ENCODE measurements at regions of chr2 and their contacts with region 1.

Region 1: DNA sequence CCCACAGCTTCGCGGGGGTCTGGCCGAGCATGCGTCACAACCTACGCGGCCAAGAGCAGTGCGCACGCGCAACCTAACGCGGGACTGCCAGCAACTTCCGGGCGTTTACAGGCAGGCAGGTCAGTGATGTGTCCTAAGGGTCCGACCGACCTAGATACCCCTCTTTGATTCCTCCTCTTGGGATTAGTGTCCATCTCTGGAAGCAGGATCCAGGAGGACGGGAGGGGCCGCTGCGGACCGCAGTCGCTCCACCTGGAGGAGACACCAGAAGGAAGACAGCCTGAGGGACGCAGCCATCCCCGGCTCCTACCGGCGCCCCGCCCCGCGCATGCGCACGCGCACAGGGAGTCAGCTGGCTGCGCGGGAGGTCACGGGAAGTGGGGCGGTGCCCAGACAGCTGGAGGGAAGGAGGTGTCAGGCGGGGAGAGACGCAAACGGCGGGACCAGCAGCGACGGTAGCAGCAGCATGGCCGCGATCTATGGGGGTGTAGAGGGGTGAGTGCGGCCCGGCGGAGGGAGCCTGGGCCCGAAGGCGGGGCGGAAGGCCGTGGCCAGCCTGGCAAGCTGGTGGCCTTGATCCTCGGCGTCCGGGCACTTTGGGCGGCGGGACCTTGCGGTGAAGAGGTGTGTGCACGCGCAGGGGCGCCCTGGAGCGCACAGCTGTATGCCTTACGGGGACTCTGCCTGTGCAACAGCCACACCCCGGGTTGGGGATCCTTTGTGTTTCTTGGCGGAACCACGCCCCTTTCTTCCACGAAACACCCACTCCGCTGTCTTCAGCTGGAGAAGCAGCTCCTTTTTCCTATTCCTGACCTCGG is at the start of gene NAGK:
- DNase-seq: peak; percentile 91
- ATAC-seq: peak; percentile 63
- H3K4me3 ChIP-seq: peak within 1 kb of the TSS; percentile 70
- H3K27ac ChIP-seq: peak within 1 kb of the TSS; percentile 90
- H3K4me1 ChIP-seq: peaks cover 51% of the 10 kb centered on the region
- H3K27me3 ChIP-seq: no peaks in the 10 kb centered on the region
- CTCF ChIP-seq: 0 out of 6 replicates have a peak, but pooled peaks of 1 of the 3 experiments have one; percentile 3
- EP300 ChIP-seq: 0 out of 4 replicates have a peak, but pooled peaks of 1 of the 2 experiments have one; percentile 6
- POLR2A ChIP-seq: peak; percentile 100
- RAD21 ChIP-seq: no peak
- polyA plus RNA-seq, gene NAGK: 67.8 to 72.5 TPM

Region 2: DNA sequence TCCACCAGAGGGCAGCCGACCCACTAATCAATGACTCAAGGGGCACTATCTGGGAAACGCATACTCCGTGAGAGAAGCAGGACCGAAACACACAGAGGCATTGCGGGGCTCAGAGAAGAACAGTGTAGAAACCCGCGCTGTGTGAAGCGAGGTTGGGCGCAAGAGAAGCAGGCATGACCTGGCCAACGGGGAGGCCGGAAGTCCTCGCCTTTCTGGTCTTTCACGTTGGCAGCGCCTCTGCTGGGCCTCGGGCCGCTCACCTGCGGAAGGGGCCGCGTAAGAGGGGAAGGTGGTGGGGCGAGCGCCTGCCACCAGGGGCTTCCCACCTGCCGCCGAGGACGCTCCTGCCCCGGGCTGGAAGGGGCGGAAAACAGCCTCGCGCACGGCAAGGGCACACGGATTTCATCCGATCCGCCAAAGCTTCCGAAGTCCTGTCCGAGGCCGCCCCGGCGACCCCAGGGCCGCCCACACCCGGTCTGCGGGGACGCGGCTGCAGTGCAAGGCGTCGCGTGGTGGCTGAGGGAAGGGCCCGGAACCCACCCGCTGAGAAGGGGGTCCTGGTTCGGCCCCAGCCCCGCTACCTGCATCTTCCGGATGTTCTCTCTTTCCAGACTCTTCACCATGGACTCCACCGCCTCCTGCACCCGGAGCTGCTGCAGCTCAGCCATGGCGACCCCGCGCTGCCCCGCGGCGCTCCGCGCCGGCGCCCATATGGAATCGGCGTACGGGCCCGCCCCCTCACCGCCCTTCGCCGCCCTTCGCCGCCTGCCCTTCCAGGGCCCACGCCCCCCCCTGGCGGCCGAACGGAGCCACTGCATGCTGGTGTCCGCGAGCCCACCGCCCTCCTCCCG is 766.9 kb before region 1 on chr2 and contains the start of gene FAM136A:
- CTCF ChIA-PET with region 1: no interaction called
- POLR2A ChIA-PET with region 1: no interaction called
- RAD21 ChIA-PET with region 1: no interaction called
- SMC1A ChIA-PET with region 1: no interaction called
- in situ Hi-C with region 1: loop called (anchors 10 kb)
- intact Hi-C with region 1: no loop called
- DNase-seq: peak; percentile 40
- ATAC-seq: peak; percentile 93
- H3K4me3 ChIP-seq: peak within 1 kb of the TSS; percentile 84
- H3K27ac ChIP-seq: peak within 1 kb of the TSS; percentile 85
- H3K4me1 ChIP-seq: peaks cover 3% of the 10 kb centered on the region; the same call in 1 of the 2 replicates
- H3K27me3 ChIP-seq: no peaks in the 10 kb centered on the region
- CTCF ChIP-seq: peak; percentile 88 to 97 (median 95)
- EP300 ChIP-seq: no peak
- POLR2A ChIP-seq: peak; percentile 82
- RAD21 ChIP-seq: peak; percentile 70
- polyA plus RNA-seq, gene FAM136A: 128 to 134 TPM

Region 3: DNA sequence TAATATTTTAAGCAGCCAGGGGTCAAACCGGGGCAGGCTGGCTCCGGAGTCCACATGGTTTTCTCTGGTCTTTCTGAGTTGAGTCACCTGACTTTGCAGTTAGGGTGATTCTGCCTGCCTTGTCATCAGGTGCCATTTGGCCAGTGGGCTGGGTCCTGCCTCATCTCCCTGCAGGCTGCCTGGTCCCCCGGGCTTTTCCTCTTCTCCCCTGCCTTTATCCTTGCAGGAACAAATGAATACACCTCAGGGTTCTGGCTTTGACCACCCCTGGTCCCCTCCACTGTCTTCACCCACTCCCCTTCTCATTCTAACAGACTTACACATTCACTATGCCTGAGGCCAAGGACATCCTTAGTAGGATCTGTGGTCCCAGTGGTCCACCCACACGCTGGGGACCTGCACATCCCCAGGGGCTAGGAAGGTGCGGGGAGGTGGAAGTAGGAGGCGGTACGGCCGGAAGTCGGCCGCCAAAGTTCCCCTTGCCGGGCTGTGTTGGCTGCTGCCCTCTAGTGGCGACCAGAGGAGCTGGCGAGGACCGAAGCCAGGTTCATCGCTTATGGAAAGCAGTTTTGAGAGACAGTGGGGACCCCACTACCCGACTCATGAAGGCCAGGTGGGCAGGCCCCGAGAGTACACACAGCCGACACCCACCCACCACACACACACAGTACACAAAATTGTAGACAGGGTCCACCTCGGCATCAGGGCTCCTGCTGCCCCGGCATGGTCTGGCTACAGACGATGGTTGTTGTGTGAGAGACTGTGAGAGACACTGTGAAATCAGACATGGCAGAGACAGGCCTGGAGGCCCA is 67.4 kb before region 1 on chr2:
- CTCF ChIA-PET with region 1: interaction called, 11 read pairs
- POLR2A ChIA-PET with region 1: interaction called, 4 read pairs
- RAD21 ChIA-PET with region 1: no interaction called
- SMC1A ChIA-PET with region 1: interaction called, 6 read pairs
- in situ Hi-C with region 1: no loop called
- intact Hi-C with region 1: loop called (anchors 5 kb)
- DNase-seq: no peak
- ATAC-seq: peak; percentile 98
- H3K4me3 ChIP-seq: peak overlapping the region; percentile 66
- H3K27ac ChIP-seq: peak overlapping the region; percentile 48; the same call in 1 of the 2 replicates
- H3K4me1 ChIP-seq: peaks cover 9% of the 10 kb centered on the region
- H3K27me3 ChIP-seq: no peaks in the 10 kb centered on the region
- CTCF ChIP-seq: peak; percentile 88 to 93 (median 91)
- EP300 ChIP-seq: no peak
- POLR2A ChIP-seq: peak; percentile 60
- RAD21 ChIP-seq: peak; percentile 48

Region 4: GRCh38 chr2:71049365-71050360 is 18.8 kb before region 1 on chr2:
- CTCF ChIA-PET with region 1: interaction called, 101 read pairs
- POLR2A ChIA-PET with region 1: interaction called, 5 read pairs
- RAD21 ChIA-PET with region 1: interaction called, 77 read pairs
- SMC1A ChIA-PET with region 1: interaction called, 93 read pairs
- in situ Hi-C with region 1: no loop called
- intact Hi-C with region 1: loop called (anchors 1 kb)
- DNase-seq: no peak
- ATAC-seq: peak; percentile 90
- H3K4me3 ChIP-seq: no peak overlapping the region
- H3K27ac ChIP-seq: no peak overlapping the region
- H3K4me1 ChIP-seq: peaks cover 4% of the 10 kb centered on the region; the same call in 1 of the 2 replicates
- H3K27me3 ChIP-seq: no peaks in the 10 kb centered on the region
- CTCF ChIP-seq: peak; percentile 32 to 55 (median 35); a peak in 5 of 6 replicates
- EP300 ChIP-seq: no peak
- POLR2A ChIP-seq: no peak
- RAD21 ChIP-seq: peak; percentile 73

Region 5: GRCh38 chr2:71100195-71100964 is 32.0 kb after region 1 on chr2:
- CTCF ChIA-PET with region 1: interaction called, 58 read pairs
- POLR2A ChIA-PET with region 1: interaction called, 11 read pairs
- RAD21 ChIA-PET with region 1: interaction called, 26 read pairs
- SMC1A ChIA-PET with region 1: interaction called, 31 read pairs
- in situ Hi-C with region 1: no loop called
- intact Hi-C with region 1: no loop called
- DNase-seq: peak; percentile 2
- ATAC-seq: peak; percentile 84
- H3K4me3 ChIP-seq: no peak overlapping the region
- H3K27ac ChIP-seq: no peak overlapping the region
- H3K4me1 ChIP-seq: no peaks in the 10 kb centered on the region
- H3K27me3 ChIP-seq: no peaks in the 10 kb centered on the region
- CTCF ChIP-seq: peak; percentile 72 to 80 (median 78)
- EP300 ChIP-seq: no peak
- POLR2A ChIP-seq: no peak
- RAD21 ChIP-seq: peak; percentile 60

Region 6: GRCh38 chr2:71157124-71157793 is 88.8 kb after region 1 on chr2:
- CTCF ChIA-PET with region 1: interaction called, 39 read pairs
- POLR2A ChIA-PET with region 1: interaction called, 6 read pairs
- RAD21 ChIA-PET with region 1: interaction called, 26 read pairs
- SMC1A ChIA-PET with region 1: interaction called, 13 read pairs
- in situ Hi-C with region 1: no loop called
- intact Hi-C with region 1: no loop called
- DNase-seq: no peak
- ATAC-seq: peak; percentile 88
- H3K4me3 ChIP-seq: no peak overlapping the region
- H3K27ac ChIP-seq: no peak overlapping the region
- H3K4me1 ChIP-seq: no peaks in the 10 kb centered on the region
- H3K27me3 ChIP-seq: no peaks in the 10 kb centered on the region
- CTCF ChIP-seq: peak; percentile 58 to 76 (median 68)
- EP300 ChIP-seq: no peak
- POLR2A ChIP-seq: no peak
- RAD21 ChIP-seq: peak; percentile 67

Region 7: DNA sequence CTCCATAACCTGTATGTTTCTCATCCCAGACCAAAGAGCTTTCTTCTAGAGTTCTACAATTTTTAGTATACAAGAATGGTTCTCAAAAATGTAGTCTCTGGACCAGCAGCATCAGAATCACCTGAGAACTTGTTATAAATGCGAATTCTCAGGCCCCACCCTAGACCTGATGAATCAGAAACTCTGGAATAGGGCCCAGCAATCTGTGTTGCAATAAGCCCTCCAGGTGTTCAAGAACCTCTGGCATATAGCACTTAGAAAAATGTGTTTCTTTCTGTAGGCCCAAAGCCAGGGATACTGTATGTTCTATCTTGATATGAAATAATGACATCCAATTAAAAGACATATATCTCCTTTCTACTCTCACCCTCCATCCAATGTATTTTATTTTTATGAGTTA is 148.1 kb after region 1 on chr2:
- CTCF ChIA-PET with region 1: no interaction called
- POLR2A ChIA-PET with region 1: no interaction called
- RAD21 ChIA-PET with region 1: no interaction called
- SMC1A ChIA-PET with region 1: no interaction called
- in situ Hi-C with region 1: no loop called
- intact Hi-C with region 1: no loop called
- DNase-seq: no peak
- ATAC-seq: no peak
- H3K4me3 ChIP-seq: no peak overlapping the region
- H3K27ac ChIP-seq: no peak overlapping the region
- H3K4me1 ChIP-seq: no peaks in the 10 kb centered on the region
- H3K27me3 ChIP-seq: no peaks in the 10 kb centered on the region
- CTCF ChIP-seq: no peak
- EP300 ChIP-seq: no peak
- POLR2A ChIP-seq: no peak
- RAD21 ChIP-seq: no peak

Region 8: DNA sequence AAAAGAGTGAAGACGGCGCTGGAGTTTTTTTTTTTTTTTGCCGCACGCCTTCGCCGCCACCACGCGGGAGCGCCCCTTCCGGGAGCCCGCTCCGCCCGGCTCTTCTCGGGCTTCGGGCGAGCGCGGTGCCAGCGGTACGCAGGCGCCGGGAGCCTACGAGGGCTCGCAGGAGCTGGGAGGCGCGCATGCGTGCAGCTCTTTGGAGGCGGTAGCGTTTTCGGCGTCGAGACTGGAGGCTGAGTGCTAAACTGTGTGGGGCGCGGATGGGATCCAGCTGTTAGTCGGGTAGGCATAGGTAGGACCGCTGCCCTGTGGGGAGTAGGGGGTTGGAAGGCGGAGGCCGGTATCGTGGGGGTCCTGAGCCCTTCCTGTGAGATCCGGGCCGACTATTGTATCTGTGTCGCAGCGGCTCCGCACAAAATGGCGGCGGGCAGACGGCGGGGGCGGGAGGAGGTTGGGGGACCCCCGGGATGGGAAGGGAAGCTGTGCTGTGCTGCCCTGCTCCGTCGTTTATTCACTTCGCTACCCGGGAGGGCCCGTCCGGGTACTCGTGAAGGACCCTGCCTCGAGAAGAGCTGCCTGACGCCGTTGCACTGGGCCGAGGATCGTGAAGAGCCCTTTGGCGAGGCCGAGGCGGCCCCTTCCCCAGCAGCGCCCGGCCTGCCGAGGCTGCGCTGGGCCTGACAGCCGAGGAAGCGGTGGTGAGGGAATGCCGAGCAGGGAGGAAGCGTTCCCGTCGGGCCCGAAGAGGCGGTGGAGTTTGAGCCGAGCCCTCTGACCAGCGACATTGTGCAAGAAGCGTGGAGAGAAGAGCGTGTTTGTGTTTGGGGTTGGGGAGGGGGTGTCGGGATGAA is 263.4 kb after region 1 on chr2 and contains the start of gene ZNF638:
- CTCF ChIA-PET with region 1: interaction called, 9 read pairs
- POLR2A ChIA-PET with region 1: interaction called, 13 read pairs
- RAD21 ChIA-PET with region 1: interaction called, 4 read pairs
- SMC1A ChIA-PET with region 1: interaction called, 7 read pairs
- in situ Hi-C with region 1: no loop called
- intact Hi-C with region 1: no loop called
- DNase-seq: peak; percentile 71
- ATAC-seq: peak; percentile 98
- H3K4me3 ChIP-seq: peak within 1 kb of the TSS; percentile 77
- H3K27ac ChIP-seq: peak within 1 kb of the TSS; percentile 80
- H3K4me1 ChIP-seq: no peaks in the 10 kb centered on the region
- H3K27me3 ChIP-seq: no peaks in the 10 kb centered on the region
- CTCF ChIP-seq: peak; percentile 74 to 84 (median 75)
- EP300 ChIP-seq: no peak
- POLR2A ChIP-seq: peak; percentile 94
- RAD21 ChIP-seq: peak; percentile 32; the same call in 1 of the 2 replicates
- polyA plus RNA-seq, gene ZNF638: 37.6 to 40.5 TPM

Region 9: GRCh38 chr2:71452565-71452964 is 384.1 kb after region 1 on chr2:
- CTCF ChIA-PET with region 1: no interaction called
- POLR2A ChIA-PET with region 1: no interaction called
- RAD21 ChIA-PET with region 1: no interaction called
- SMC1A ChIA-PET with region 1: no interaction called
- in situ Hi-C with region 1: no loop called
- intact Hi-C with region 1: no loop called
- DNase-seq: no peak
- ATAC-seq: peak; percentile 67
- H3K4me3 ChIP-seq: no peak overlapping the region
- H3K27ac ChIP-seq: no peak overlapping the region
- H3K4me1 ChIP-seq: no peaks in the 10 kb centered on the region
- H3K27me3 ChIP-seq: peaks cover 4 to 11% of the 10 kb centered on the region in 2 experiments; a peak in 3 of 4 replicates
- CTCF ChIP-seq: 0 out of 6 replicates have a peak, but pooled peaks of 1 of the 3 experiments have one; percentile 15
- EP300 ChIP-seq: no peak
- POLR2A ChIP-seq: no peak
- RAD21 ChIP-seq: no peak